Ascending aorta (tissue), 2 donors: ENCODE measurements at regions of chr9 and their contacts with region 1.

Region 1: DNA sequence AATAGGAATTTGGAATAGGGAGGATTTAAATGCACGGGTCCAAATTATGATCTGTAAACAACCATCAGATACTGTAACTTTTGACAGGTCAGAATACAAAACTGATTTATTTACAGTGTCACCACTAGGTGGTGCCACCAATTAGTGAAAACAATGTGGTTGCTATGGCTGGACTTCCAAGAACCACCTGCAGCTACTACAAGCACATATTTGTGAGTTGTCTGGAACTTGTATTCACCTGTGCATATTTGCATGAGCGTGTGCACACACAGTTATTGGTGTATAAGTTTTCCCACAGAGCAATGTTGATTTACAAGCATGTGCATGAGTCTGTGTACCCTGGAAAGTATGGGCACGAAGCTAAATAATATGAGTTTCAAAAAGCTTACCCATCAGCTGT is 3.0 kb upstream of the HRCT1 start:
- DNase-seq: no peak
- H3K4me3 ChIP-seq: no peak overlapping the region
- H3K27ac ChIP-seq: no peak overlapping the region
- H3K4me1 ChIP-seq: peaks cover 27 to 41% of the 10 kb centered on the region in 2 donors
- H3K27me3 ChIP-seq: no peaks in the 10 kb centered on the region
- CTCF ChIP-seq: peak; percentile 59 to 70 (median 69)

Region 2: GRCh38 chr9:35657546-35658136 is 245.4 kb before region 1 on chr9 and contains the start of gene RMRP:
- intact Hi-C with region 1: loop called (anchors 10 kb)
- DNase-seq: peak; percentile 90 to 99
- H3K4me3 ChIP-seq: peak within 1 kb of the TSS; percentile 88 to 99
- H3K27ac ChIP-seq: peak within 1 kb of the TSS; percentile 97 to 100
- H3K4me1 ChIP-seq: peaks cover 5 to 35% of the 10 kb centered on the region in 2 donors
- H3K27me3 ChIP-seq: no peaks in the 10 kb centered on the region
- CTCF ChIP-seq: peak; percentile 32 to 56 (median 34)
- total RNA-seq, gene RMRP: 17,070 TPM

Region 3: DNA sequence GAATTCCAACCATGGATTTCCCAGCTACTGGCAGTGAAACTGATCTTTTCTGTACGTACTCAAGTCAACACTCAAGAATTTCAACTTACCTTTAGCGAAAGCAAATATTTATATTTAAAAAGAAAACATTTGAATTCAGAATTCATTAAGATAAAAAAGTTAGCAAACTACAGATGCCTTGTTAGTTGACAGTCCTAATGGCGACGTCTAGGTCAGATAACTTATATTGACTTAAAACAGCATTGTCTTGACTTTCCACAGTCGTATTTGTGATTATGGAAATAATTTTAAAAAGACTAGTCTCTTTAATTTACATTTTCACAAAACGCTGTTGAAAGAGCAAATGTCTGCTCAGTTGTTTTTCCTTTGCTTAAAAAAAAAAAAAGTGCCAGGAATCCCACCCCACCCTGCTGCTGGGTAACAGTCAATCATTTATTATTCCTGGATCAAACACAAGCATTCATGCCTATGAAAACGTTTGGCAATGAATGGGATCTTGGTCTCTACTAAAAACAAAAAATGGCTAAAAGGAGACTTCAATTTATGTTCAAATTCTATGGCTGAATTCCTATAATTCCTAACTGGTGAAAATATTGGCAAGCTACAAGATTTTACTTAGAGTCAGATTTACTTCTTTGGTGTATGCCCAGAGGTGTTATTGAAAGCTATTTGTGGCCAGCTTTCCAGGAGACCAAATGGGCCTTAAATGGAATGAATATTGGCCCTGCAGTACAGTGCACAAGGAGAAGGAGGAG is 32.9 kb after region 1 on chr9:
- intact Hi-C with region 1: loop called (anchors 1 kb)
- DNase-seq: no peak
- H3K4me3 ChIP-seq: no peak overlapping the region
- H3K27ac ChIP-seq: peak overlapping the region; percentile 69 to 87
- H3K4me1 ChIP-seq: peaks cover 6 to 46% of the 10 kb centered on the region in 2 donors
- H3K27me3 ChIP-seq: no peaks in the 10 kb centered on the region
- CTCF ChIP-seq: no peak

Region 4: DNA sequence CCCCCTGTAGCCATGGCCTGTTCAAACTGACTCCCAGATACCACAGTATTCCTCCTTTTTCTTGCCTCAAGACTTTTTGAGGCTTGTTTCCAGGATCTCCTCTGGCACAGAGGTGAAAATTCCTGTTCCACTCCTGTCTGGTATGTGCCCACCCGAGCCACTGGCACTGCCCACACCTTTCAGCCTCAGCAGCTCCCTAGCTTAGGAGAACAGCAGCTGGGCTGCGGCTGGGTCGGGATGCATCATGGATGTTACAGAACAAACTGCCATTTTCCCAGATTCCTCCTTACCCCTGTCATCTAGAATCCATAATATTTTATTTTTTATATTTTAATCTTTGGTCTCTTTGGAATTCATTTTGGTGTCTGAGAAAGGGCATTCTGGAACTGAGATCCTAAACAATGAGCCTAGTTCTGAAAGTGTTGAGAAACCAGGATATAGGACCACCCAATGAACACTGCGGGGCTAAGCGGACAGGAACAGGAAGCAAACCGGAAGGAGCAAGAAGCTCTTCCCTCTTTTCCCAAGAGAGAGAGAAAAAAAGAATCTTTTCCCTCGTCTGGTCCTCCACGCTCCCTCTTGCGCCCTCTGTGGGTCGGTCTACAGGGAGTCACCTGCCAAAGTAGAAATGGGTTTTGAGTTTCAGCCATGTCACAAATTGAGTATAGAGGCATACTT is 42.4 kb after region 1 on chr9:
- intact Hi-C with region 1: loop called (anchors 1 kb)
- DNase-seq: peak in 1 of 2 donors; percentile 87
- H3K4me3 ChIP-seq: peak overlapping the region in 1 of 2 donors; percentile 9
- H3K27ac ChIP-seq: peak overlapping the region; percentile 53 to 72
- H3K4me1 ChIP-seq: peaks cover 5 to 21% of the 10 kb centered on the region in 2 donors
- H3K27me3 ChIP-seq: no peaks in the 10 kb centered on the region
- CTCF ChIP-seq: peak; percentile 69 to 87 (median 85)

Region 5: GRCh38 chr9:36023260-36024048 is 120.4 kb after region 1 on chr9:
- intact Hi-C with region 1: loop called (anchors 1 kb)
- DNase-seq: peak in 1 of 2 donors; percentile 75
- H3K4me3 ChIP-seq: no peak overlapping the region
- H3K27ac ChIP-seq: no peak overlapping the region
- H3K4me1 ChIP-seq: no peaks in the 10 kb centered on the region
- H3K27me3 ChIP-seq: no peaks in the 10 kb centered on the region
- CTCF ChIP-seq: peak; percentile 50 to 81 (median 61)